ENCODE measurements at regions of chr14 and their contacts with region 1.

Region 1: GRCh38 chr14:50607181-50607580 is 47.2 kb downstream of the ATL1 start:
- DNase-seq: no peak
- H3K4me3 Mint-ChIP-seq: no peak overlapping the region
- H3K27ac Mint-ChIP-seq: peak overlapping the region; percentile 7
- H3K4me1 Mint-ChIP-seq: peaks cover 7% of the 10 kb centered on the region
- H3K27me3 Mint-ChIP-seq: peaks cover 24% of the 10 kb centered on the region

Region 2: DNA sequence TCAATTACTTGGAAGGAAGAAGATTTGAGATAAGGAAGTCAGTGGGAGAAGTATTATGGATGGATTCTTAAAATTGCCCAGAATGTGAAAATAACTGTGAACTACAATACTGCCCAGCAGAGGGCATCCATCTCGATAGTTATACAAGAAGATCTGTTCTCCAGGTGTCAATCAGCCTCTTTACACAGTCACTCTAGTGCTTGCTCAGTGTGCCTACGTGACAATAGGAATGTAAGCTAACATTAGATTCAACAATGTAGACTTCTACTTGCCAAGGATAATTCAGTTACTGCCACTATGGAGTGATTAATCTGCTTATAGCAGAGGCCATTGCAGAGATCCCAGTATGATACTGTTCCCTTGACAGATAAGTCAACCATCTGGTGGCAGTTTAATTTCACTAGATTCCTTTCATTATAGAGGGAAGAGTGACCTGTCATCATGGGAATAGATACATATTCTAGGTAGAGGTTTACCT is 64.2 kb before region 1 on chr14:
- intact Hi-C with region 1: loop called (anchors 5 kb)
- DNase-seq: peak; percentile 82
- H3K4me3 Mint-ChIP-seq: no peak overlapping the region
- H3K27ac Mint-ChIP-seq: no peak overlapping the region
- H3K4me1 Mint-ChIP-seq: peaks cover 8% of the 10 kb centered on the region
- H3K27me3 Mint-ChIP-seq: peaks cover 10% of the 10 kb centered on the region

Region 3: GRCh38 chr14:50573858-50574257 is 33.3 kb before region 1 on chr14:
- intact Hi-C with region 1: no loop called
- DNase-seq: no peak
- H3K4me3 Mint-ChIP-seq: no peak overlapping the region
- H3K27ac Mint-ChIP-seq: no peak overlapping the region
- H3K4me1 Mint-ChIP-seq: no peaks in the 10 kb centered on the region
- H3K27me3 Mint-ChIP-seq: peaks cover 24% of the 10 kb centered on the region